HepG2 (cell line): ENCODE measurements at regions of chr2 and their contacts with region 1.

Region 1: DNA sequence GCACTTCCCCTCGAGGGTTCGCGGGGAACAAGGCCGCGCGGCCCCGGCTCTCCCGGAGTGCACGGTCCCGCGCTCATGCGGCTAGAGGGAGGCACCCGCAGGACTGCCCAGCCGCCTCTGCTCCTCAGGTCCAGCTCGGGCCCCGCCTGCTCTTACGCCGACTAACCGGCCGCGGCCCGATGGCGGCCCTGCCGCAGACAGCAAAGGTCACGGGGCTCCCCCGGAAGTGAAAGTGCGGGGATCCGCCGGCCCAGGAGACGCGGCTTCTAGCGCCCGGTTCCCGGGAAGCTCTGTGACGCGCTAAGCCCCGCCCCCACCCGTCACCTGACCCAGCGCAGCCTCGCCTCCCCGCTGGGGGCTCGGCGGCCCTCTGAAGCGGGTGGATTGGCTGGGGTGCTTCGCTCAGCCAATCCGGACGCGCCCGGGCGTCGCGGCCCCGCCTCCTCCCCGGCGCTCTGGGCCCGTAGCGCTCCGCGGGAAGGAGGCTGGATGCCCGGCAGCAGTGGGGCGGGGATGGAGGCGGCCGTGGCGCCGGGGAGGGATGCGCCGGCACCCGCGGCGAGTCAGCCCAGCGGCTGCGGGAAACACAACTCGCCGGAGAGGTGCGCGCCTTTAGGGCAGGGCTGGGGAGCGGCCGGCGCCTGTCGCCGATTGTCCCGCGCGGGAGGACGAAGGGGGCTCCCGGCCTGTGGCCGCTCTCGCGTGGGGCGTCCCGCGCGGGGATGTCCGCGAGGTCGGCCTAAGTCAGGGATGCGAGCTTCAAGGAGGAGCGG is at the start of gene SCLY:
- DNase-seq: peak; percentile 97
- ATAC-seq: peak; percentile 96
- H3K4me3 ChIP-seq: peak within 1 kb of the TSS; percentile 97 to 99 (median 98)
- H3K27ac ChIP-seq: peak within 1 kb of the TSS; percentile 91
- H3K4me1 ChIP-seq: peaks cover 59% of the 10 kb centered on the region
- H3K27me3 ChIP-seq: no peaks in the 10 kb centered on the region; a peak in 1 of 5 replicates
- CTCF ChIP-seq: peak; percentile 3; the same call in 1 of the 2 replicates
- EP300 ChIP-seq: 0 out of 4 replicates have a peak, but pooled peaks of 1 of the 2 experiments have one; percentile 35
- POLR2A ChIP-seq: peak; percentile 87 to 91
- RAD21 ChIP-seq: peak; percentile 75
- total RNA-seq, gene SCLY: 31.6 and 38.6 TPM in 2 replicates

Region 2: GRCh38 chr2:238027591-238028415 is 32.9 kb before region 1 on chr2:
- CTCF ChIA-PET with region 1: no interaction called
- POLR2A ChIA-PET with region 1: interaction called, 14 read pairs
- in situ Hi-C with region 1: no loop called
- intact Hi-C with region 1: no loop called
- DNase-seq: no peak
- ATAC-seq: no peak
- H3K4me3 ChIP-seq: no peak overlapping the region
- H3K27ac ChIP-seq: no peak overlapping the region
- H3K4me1 ChIP-seq: peaks cover 14% of the 10 kb centered on the region
- H3K27me3 ChIP-seq: no peaks in the 10 kb centered on the region
- CTCF ChIP-seq: no peak
- EP300 ChIP-seq: no peak
- POLR2A ChIP-seq: no peak
- RAD21 ChIP-seq: no peak

Region 3: DNA sequence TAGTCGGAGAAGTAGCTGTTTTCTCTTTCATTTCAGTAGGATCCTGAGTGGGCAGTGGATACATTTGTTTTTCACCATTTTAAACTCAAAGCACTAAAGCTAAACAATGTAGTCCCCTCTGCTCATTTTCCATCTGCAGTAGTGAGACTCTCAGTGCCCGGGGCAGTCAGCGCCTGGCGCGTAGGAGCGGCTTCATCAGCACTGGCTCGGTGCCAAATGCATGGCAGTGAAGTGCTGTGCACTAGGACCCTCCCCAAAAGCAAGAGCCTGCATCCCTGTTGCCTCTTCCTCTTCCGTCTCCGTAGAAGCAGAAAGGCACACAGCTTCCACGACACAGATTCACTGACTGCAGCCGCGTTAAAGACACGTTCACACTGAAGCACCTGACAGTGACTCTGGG is 20.4 kb after region 1 on chr2:
- CTCF ChIA-PET with region 1: no interaction called
- POLR2A ChIA-PET with region 1: interaction called, 27 read pairs
- in situ Hi-C with region 1: no loop called
- intact Hi-C with region 1: loop called (anchors 2 kb)
- DNase-seq: no peak
- ATAC-seq: no peak
- H3K4me3 ChIP-seq: no peak overlapping the region
- H3K27ac ChIP-seq: no peak overlapping the region
- H3K4me1 ChIP-seq: peaks cover 48% of the 10 kb centered on the region
- H3K27me3 ChIP-seq: no peaks in the 10 kb centered on the region
- CTCF ChIP-seq: no peak
- EP300 ChIP-seq: no peak
- POLR2A ChIP-seq: no peak
- RAD21 ChIP-seq: no peak

Region 4: DNA sequence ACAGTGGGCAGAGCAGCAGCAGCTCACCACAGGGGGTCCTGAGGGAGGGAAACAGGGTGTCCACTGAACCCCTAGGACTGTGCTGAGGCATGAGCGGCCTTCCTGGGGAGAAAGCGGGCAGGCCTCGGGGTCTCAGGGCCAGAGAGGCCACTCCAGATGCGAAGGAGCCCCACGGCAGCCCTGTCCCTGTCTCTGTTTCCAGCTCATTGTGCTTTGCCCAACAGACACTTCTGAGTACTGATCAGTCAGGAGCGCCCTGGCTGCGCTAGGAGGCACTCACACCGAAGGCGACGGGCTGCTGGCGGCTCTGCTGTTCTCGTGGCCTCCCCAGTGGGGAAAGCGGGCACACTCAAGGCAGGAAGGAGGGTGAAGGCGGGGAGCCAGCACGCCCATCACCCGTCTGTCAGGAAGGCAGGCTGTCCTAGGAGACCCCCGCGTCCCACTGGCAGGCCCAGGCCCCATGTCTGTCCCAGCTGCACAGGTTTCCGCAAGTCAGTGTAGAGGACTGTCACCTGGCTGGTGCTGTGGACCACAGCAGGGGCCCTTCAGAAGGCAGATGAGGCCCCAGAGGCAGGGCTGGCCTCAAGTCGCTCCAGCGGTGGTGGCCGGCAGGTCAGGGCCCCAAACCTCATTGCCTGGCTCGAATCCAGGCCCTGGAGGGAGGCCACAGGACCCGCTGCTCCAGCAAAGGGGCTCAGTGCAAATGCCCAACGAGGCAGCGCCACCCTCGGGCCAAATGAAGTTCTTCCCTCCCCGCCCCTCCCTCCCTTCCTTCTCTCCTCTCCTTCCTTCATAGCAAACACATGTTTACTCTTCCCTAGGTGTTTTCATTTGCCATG is 46.2 kb after region 1 on chr2:
- CTCF ChIA-PET with region 1: no interaction called
- POLR2A ChIA-PET with region 1: interaction called, 18 read pairs
- in situ Hi-C with region 1: no loop called
- intact Hi-C with region 1: loop called (anchors 2 kb)
- DNase-seq: peak; percentile 52
- ATAC-seq: peak; percentile 40
- H3K4me3 ChIP-seq: peak overlapping the region; percentile 51 to 73 (median 53)
- H3K27ac ChIP-seq: no peak overlapping the region
- H3K4me1 ChIP-seq: peaks cover 56% of the 10 kb centered on the region
- H3K27me3 ChIP-seq: peaks cover 9 to 40% of the 10 kb centered on the region in 2 experiments
- CTCF ChIP-seq: peak; percentile 87
- EP300 ChIP-seq: no peak
- POLR2A ChIP-seq: no peak
- RAD21 ChIP-seq: peak; percentile 74; the same call in 1 of the 2 replicates

Region 5: GRCh38 chr2:238449909-238450417 is 389.2 kb after region 1 on chr2:
- CTCF ChIA-PET with region 1: no interaction called
- POLR2A ChIA-PET with region 1: no interaction called
- in situ Hi-C with region 1: no loop called
- intact Hi-C with region 1: loop called (anchors 10 kb)
- DNase-seq: peak; percentile 98
- ATAC-seq: peak; percentile 98
- H3K4me3 ChIP-seq: no peak overlapping the region; a peak in 1 of 6 replicates
- H3K27ac ChIP-seq: peak overlapping the region; percentile 89
- H3K4me1 ChIP-seq: peaks cover 39% of the 10 kb centered on the region
- H3K27me3 ChIP-seq: no peaks in the 10 kb centered on the region
- CTCF ChIP-seq: peak; percentile 58
- EP300 ChIP-seq: peak; percentile 82 to 83; a peak in 2 of 4 replicates
- POLR2A ChIP-seq: peak in 1 of 2 experiments; percentile 52; a peak in 2 of 4 replicates
- RAD21 ChIP-seq: peak; percentile 56; the same call in 1 of the 2 replicates